Breast epithelium (tissue), 4 donors: ENCODE measurements at regions of chr9 and their contacts with region 1.

Region 1: DNA sequence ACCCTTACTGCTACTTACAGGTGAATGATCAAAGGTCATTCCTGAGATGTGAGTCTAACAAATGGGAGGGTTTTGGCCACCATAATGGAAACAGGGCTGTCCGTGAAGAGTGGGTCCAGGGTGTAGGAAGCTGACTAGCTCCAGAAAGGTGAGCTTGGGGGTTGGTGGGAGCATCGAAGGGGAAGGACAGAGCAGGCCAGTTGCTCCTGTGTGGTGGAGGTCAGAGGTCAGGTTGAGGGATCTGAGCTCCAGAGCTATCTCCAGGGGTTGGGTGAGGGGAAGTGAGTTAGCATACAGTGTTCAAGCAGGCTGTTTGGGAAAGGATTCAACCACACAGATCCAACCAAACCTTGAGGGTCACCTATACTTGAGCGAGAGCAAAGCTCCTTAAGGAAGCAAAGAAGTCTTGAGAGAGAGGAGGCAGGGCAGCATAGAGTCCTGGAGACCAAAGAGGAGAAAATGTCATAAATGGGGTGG is 18.7 kb upstream of the GLDC start:
- DNase-seq: no peak
- H3K4me3 ChIP-seq: no peak overlapping the region
- H3K27ac ChIP-seq: no peak overlapping the region
- H3K4me1 ChIP-seq: no peaks in the 10 kb centered on the region
- H3K27me3 ChIP-seq: no peaks in the 10 kb centered on the region
- CTCF ChIP-seq: no peak
- POLR2A ChIP-seq: no peak

Region 2: GRCh38 chr9:6399071-6399470 is 265.2 kb before region 1 on chr9:
- intact Hi-C with region 1: loop called (anchors 5 kb)
- DNase-seq: no peak
- H3K4me3 ChIP-seq: no peak overlapping the region
- H3K27ac ChIP-seq: no peak overlapping the region
- H3K4me1 ChIP-seq: no peaks in the 10 kb centered on the region
- H3K27me3 ChIP-seq: no peaks in the 10 kb centered on the region
- CTCF ChIP-seq: no peak
- POLR2A ChIP-seq: no peak

Region 3: GRCh38 chr9:6877671-6878161 is 213.5 kb after region 1 on chr9:
- intact Hi-C with region 1: loop called (anchors 5 kb)
- DNase-seq: no peak
- H3K4me3 ChIP-seq: no peak overlapping the region
- H3K27ac ChIP-seq: no peak overlapping the region
- H3K4me1 ChIP-seq: no peaks in the 10 kb centered on the region
- H3K27me3 ChIP-seq: no peaks in the 10 kb centered on the region
- CTCF ChIP-seq: no peak
- POLR2A ChIP-seq: no peak